Activated T-helper 2 cell treated with anti-CD3 and anti-CD28 coated beads, Interferon-gamma antibody, Interleukin-2, Interleukin-4, amounts not matched to agents 10 μg/mL and 5 μg/mL and 100 μg/mL, durations not matched to agents 14 hours and 24 hours and 36 hours (primary cell): ENCODE measurements at regions of chr21 and their contacts with region 1.

Region 1: GRCh38 chr21:36069713-36070573 is at the start of gene CBR1:
- DNase-seq: peak; percentile 86
- H3K4me3 Mint-ChIP-seq: peak within 1 kb of the TSS; percentile 91
- H3K27ac Mint-ChIP-seq: peak within 1 kb of the TSS; percentile 79
- H3K4me1 Mint-ChIP-seq: peaks cover 44% of the 10 kb centered on the region
- H3K27me3 Mint-ChIP-seq: no peaks in the 10 kb centered on the region
- total RNA-seq, gene CBR1: 62.2 and 62.7 TPM in 2 replicates

Region 2: GRCh38 chr21:35720208-35720731 is 349.7 kb before region 1 on chr21:
- intact Hi-C with region 1: no loop called
- DNase-seq: no peak
- H3K4me3 Mint-ChIP-seq: no peak overlapping the region
- H3K27ac Mint-ChIP-seq: no peak overlapping the region
- H3K4me1 Mint-ChIP-seq: no peaks in the 10 kb centered on the region
- H3K27me3 Mint-ChIP-seq: peaks cover 27% of the 10 kb centered on the region

Region 3: GRCh38 chr21:36104317-36105300 is 34.7 kb after region 1 on chr21:
- intact Hi-C with region 1: loop called (anchors 1 kb)
- DNase-seq: no peak
- H3K4me3 Mint-ChIP-seq: peak overlapping the region; percentile 67
- H3K27ac Mint-ChIP-seq: peak overlapping the region; percentile 54
- H3K4me1 Mint-ChIP-seq: peaks cover 11% of the 10 kb centered on the region
- H3K27me3 Mint-ChIP-seq: peaks cover 36% of the 10 kb centered on the region

Region 4: GRCh38 chr21:36135391-36136102 is 65.6 kb after region 1 on chr21:
- intact Hi-C with region 1: loop called (anchors 2 kb)
- DNase-seq: peak; percentile 69
- H3K4me3 Mint-ChIP-seq: peak overlapping the region; percentile 90
- H3K27ac Mint-ChIP-seq: peak overlapping the region; percentile 92
- H3K4me1 Mint-ChIP-seq: peaks cover 24% of the 10 kb centered on the region
- H3K27me3 Mint-ChIP-seq: no peaks in the 10 kb centered on the region